ENCODE measurements at regions of chr10 and their contacts with region 1.

Region 1: GRCh38 chr10:35635576-35635975 is 6.5 kb downstream of the FZD8 start:
- DNase-seq: peak; percentile 17
- H3K4me3 Mint-ChIP-seq: no peak overlapping the region
- H3K27ac Mint-ChIP-seq: no peak overlapping the region
- H3K4me1 Mint-ChIP-seq: no peaks in the 10 kb centered on the region
- H3K27me3 Mint-ChIP-seq: peaks cover 33% of the 10 kb centered on the region

Region 2: DNA sequence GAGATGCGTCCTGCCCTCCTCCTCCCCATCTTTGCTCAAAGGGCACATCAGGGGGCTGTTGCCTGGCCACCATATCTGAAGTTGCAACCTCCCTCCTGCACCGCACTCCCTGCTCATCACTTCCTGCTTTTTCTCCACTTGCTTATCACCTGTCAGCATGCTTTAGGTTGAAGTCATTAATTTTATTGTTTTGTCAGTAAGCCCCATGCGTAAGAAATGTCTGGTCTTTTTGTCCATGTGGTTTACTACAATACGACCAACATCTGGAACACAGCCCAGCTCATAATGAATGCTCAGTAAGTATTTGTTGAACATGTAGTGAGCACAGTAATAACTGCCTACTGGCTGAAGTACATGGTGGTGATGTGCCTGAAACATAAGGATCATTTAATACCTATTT is 102.0 kb before region 1 on chr10:
- intact Hi-C with region 1: no loop called
- DNase-seq: no peak
- H3K4me3 Mint-ChIP-seq: no peak overlapping the region
- H3K27ac Mint-ChIP-seq: peak overlapping the region; percentile 4
- H3K4me1 Mint-ChIP-seq: no peaks in the 10 kb centered on the region
- H3K27me3 Mint-ChIP-seq: no peaks in the 10 kb centered on the region

Region 3: GRCh38 chr10:35781643-35782035 is 146.1 kb after region 1 on chr10:
- intact Hi-C with region 1: loop called (anchors 5 kb)
- DNase-seq: no peak
- H3K4me3 Mint-ChIP-seq: no peak overlapping the region
- H3K27ac Mint-ChIP-seq: no peak overlapping the region
- H3K4me1 Mint-ChIP-seq: no peaks in the 10 kb centered on the region
- H3K27me3 Mint-ChIP-seq: peaks cover 2% of the 10 kb centered on the region

Region 4: DNA sequence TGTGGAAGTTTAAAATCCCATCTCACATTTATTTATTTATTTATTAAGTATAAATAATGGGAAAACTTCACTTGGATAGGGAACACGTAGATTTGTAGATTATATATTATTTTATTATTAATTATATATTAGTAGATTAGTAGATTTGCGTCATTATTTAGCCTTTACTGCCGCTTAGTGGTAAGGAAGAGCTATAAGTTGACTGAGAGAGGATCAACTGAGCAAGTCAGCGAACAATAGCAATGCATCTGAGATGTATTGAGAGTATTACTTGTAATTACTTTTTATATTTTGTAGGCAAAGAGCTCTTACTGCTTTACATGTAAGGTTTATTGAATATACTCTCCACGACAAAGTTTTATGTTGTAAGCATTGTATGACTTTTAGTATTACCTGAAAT is 1245.3 kb after region 1 on chr10:
- intact Hi-C with region 1: loop called (anchors 5 kb)
- DNase-seq: no peak
- H3K4me3 Mint-ChIP-seq: no peak overlapping the region
- H3K27ac Mint-ChIP-seq: no peak overlapping the region
- H3K4me1 Mint-ChIP-seq: no peaks in the 10 kb centered on the region
- H3K27me3 Mint-ChIP-seq: no peaks in the 10 kb centered on the region

Measured in activated T-helper 1 cell treated with anti-CD3 and anti-CD28 coated beads, Interleukin-12 subunit alpha, Interleukin-12 subunit beta, Interleukin-2, Interleukin-4 antibody, amounts not matched to agents 30 ng/mL and 10 ng/mL and 1 ng/mL, durations not matched to agents 14 hours and 24 hours and 36 hours (primary cell).